Activated T-helper 2 cell treated with anti-CD3 and anti-CD28 coated beads, Interferon-gamma antibody, Interleukin-2, Interleukin-4, amounts not matched to agents 10 μg/mL and 5 μg/mL and 100 μg/mL, durations not matched to agents 14 hours and 24 hours and 36 hours (primary cell): ENCODE measurements at regions of chr11 and their contacts with region 1.

Region 1: GRCh38 chr11:78228467-78228866 is 39.7 kb downstream of the USP35 start:
- DNase-seq: peak; percentile 30
- H3K4me3 Mint-ChIP-seq: no peak overlapping the region
- H3K27ac Mint-ChIP-seq: no peak overlapping the region
- H3K4me1 Mint-ChIP-seq: peaks cover 73% of the 10 kb centered on the region
- H3K27me3 Mint-ChIP-seq: no peaks in the 10 kb centered on the region

Region 2: GRCh38 chr11:78188286-78189173 is 39.9 kb before region 1 on chr11 and contains the starts of genes KCTD21 and USP35:
- intact Hi-C with region 1: loop called (anchors 2 kb)
- DNase-seq: peak; percentile 93
- H3K4me3 Mint-ChIP-seq: peak within 1 kb of the TSS; percentile 97
- H3K27ac Mint-ChIP-seq: peak within 1 kb of the TSS; percentile 99
- H3K4me1 Mint-ChIP-seq: peaks cover 49% of the 10 kb centered on the region
- H3K27me3 Mint-ChIP-seq: no peaks in the 10 kb centered on the region
- total RNA-seq, gene KCTD21: 10.0 and 10.4 TPM in 2 replicates
- total RNA-seq, gene USP35: 12.9 and 14.6 TPM in 2 replicates

Region 3: DNA sequence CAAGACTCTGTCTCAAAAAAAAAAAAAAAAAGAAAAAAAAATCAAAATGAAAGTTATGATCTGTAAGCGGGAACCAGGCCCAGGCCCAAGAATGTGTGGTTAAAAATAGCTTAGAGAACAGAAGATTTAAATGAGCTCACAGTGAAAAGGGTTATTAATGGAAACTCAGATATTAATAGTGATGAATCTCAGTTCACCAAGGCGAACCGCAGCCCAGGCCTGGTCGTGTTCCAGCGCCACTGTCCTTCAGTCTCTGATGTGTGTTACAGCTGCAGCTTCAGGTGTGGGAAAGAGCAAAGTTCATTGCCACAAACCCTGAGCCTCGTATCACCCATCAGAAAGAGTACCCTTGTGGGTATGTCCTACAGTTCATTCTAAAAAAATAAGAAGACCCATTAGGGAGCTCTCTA is 82.0 kb after region 1 on chr11:
- intact Hi-C with region 1: loop called (anchors 5 kb)
- DNase-seq: no peak
- H3K4me3 Mint-ChIP-seq: peak overlapping the region; percentile 38
- H3K27ac Mint-ChIP-seq: peak overlapping the region; percentile 49
- H3K4me1 Mint-ChIP-seq: peaks cover 77% of the 10 kb centered on the region
- H3K27me3 Mint-ChIP-seq: no peaks in the 10 kb centered on the region

Region 4: GRCh38 chr11:78332174-78332866 is 103.9 kb after region 1 on chr11:
- intact Hi-C with region 1: loop called (anchors 5 kb)
- DNase-seq: no peak
- H3K4me3 Mint-ChIP-seq: peak overlapping the region; percentile 47
- H3K27ac Mint-ChIP-seq: peak overlapping the region; percentile 90
- H3K4me1 Mint-ChIP-seq: peaks cover 87% of the 10 kb centered on the region
- H3K27me3 Mint-ChIP-seq: no peaks in the 10 kb centered on the region

Region 5: GRCh38 chr11:78397387-78397786 is 168.9 kb after region 1 on chr11:
- intact Hi-C with region 1: loop called (anchors 1 kb)
- DNase-seq: no peak
- H3K4me3 Mint-ChIP-seq: no peak overlapping the region
- H3K27ac Mint-ChIP-seq: peak overlapping the region; percentile 51
- H3K4me1 Mint-ChIP-seq: peaks cover 69% of the 10 kb centered on the region
- H3K27me3 Mint-ChIP-seq: no peaks in the 10 kb centered on the region

Region 6: GRCh38 chr11:78424334-78425270 is 196.1 kb after region 1 on chr11:
- intact Hi-C with region 1: loop called (anchors 2 kb)
- DNase-seq: no peak
- H3K4me3 Mint-ChIP-seq: peak overlapping the region; percentile 55
- H3K27ac Mint-ChIP-seq: peak overlapping the region; percentile 73
- H3K4me1 Mint-ChIP-seq: peaks cover 83% of the 10 kb centered on the region
- H3K27me3 Mint-ChIP-seq: no peaks in the 10 kb centered on the region

Region 7: GRCh38 chr11:78564490-78565467 is 336.3 kb after region 1 on chr11:
- intact Hi-C with region 1: loop called (anchors 1 kb)
- DNase-seq: peak; percentile 26
- H3K4me3 Mint-ChIP-seq: no peak overlapping the region
- H3K27ac Mint-ChIP-seq: peak overlapping the region; percentile 76
- H3K4me1 Mint-ChIP-seq: peaks cover 53% of the 10 kb centered on the region
- H3K27me3 Mint-ChIP-seq: no peaks in the 10 kb centered on the region